A549 (cell line): ENCODE measurements at regions of chr16 and their contacts with region 1.

Region 1: DNA sequence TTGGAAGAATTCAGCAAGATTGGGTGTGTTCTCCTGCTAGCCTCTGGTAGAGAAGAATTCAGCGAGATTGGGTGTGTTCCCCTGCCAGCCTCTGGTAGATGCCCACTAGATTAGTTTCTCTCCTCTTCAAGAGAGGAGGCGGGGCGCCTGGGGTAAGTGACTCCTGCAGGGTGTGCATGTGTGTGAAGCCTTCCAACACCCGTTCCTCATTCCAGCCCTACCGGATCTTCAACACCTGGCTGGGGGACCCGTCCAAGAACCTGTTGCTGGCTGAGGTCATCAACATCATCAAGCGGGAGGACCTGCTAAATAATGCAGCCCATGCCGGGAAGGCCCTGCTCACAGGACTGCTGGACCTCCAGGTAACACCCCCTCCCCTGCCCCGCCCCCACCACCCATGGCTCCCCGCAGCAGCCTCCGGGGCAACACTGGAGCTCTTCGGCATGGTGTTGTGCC is 21.3 kb downstream of the TMEM186 start:
- DNase-seq: no peak
- ATAC-seq: peak; percentile 35 to 38; a peak in 3 of 6 replicates
- H3K4me3 ChIP-seq: no peak overlapping the region
- H3K27ac ChIP-seq: no peak overlapping the region
- H3K4me1 ChIP-seq: no peaks in the 10 kb centered on the region
- CTCF ChIP-seq: no peak
- EP300 ChIP-seq: no peak
- POLR2A ChIP-seq: no peak
- RAD21 ChIP-seq: no peak

Region 2: GRCh38 chr16:8720080-8720966 is 55.8 kb before region 1 on chr16:
- CTCF ChIA-PET with region 1: no interaction called
- POLR2A ChIA-PET with region 1: no interaction called
- DNase-seq: no peak
- ATAC-seq: no peak; a peak in 1 of 6 replicates
- H3K4me3 ChIP-seq: no peak overlapping the region
- H3K27ac ChIP-seq: no peak overlapping the region
- H3K4me1 ChIP-seq: no peaks in the 10 kb centered on the region
- CTCF ChIP-seq: no peak
- EP300 ChIP-seq: no peak
- POLR2A ChIP-seq: no peak
- RAD21 ChIP-seq: no peak

Region 3: DNA sequence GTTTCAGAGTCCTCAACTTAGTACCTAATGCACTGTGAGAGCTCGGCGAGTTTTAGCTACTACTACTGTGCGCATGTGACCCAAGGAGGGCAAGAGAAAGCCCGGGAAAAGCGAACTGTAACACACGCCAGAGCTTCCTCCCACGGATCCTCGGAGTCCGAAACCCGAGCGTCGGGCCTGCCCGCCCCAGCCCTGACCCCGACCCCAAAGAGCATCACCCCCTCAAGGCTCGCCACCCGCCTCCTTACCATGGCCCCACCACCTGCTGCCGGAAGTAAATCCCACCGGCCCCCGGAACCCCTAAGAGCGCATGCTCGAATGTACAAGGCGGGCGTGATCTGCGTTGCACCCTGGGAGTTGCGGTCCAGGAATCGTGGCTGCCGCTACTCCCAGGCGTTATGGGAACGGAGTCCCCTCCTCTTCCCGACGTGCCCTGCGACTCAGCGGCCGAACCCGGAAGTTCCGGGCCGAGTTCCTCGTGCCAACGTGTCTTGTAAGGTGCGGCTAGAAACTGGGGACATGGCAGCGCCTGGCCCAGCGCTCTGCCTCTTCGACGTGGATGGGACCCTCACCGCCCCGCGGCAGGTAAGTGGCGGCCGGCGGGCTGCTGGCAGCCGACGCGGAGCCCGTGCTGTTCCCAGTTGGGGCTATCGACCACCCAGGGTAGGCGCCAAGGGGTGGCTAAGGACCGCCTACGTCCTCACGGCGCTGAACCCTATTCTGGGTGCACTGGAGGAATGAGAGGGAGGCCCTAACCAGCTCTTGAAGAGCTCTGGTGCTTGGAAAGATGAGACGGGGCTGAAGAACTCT is 21.4 kb after region 1 on chr16 and contains the starts of genes PMM2 and TMEM186:
- CTCF ChIA-PET with region 1: interaction called, 11 read pairs
- POLR2A ChIA-PET with region 1: no interaction called
- DNase-seq: peak; percentile 96 to 98
- ATAC-seq: peak; percentile 97 to 98
- H3K4me3 ChIP-seq: peak within 1 kb of the TSS; percentile 88
- H3K27ac ChIP-seq: peak within 1 kb of the TSS; percentile 95 to 96
- H3K4me1 ChIP-seq: peaks cover 28% of the 10 kb centered on the region
- CTCF ChIP-seq: no peak
- EP300 ChIP-seq: no peak
- POLR2A ChIP-seq: peak; percentile 89
- RAD21 ChIP-seq: no peak
- polyA plus RNA-seq, gene PMM2: 46.4 and 56.6 TPM in 2 replicates
- polyA plus RNA-seq, gene TMEM186: 10.9 and 12.1 TPM in 2 replicates